Heart left ventricle (tissue), 16 donors: ENCODE measurements at regions of chr3 and their contacts with region 1.

Region 1: GRCh38 chr3:73143821-73144237 is 82.4 kb downstream of the EBLN2 start:
- DNase-seq: no peak
- ATAC-seq: peak; percentile 33 to 48 (median 44)
- H3K4me3 ChIP-seq: no peak overlapping the region
- H3K27ac ChIP-seq: peak overlapping the region in 5 of 12 donors; percentile 29 to 57 (median 36)
- H3K4me1 ChIP-seq: peaks cover 0 to 43% (median 18%) of the 10 kb centered on the region in 12 donors
- H3K27me3 ChIP-seq: no peaks in the 10 kb centered on the region
- CTCF ChIP-seq: no peak
- POLR2A ChIP-seq: no peak

Region 2: DNA sequence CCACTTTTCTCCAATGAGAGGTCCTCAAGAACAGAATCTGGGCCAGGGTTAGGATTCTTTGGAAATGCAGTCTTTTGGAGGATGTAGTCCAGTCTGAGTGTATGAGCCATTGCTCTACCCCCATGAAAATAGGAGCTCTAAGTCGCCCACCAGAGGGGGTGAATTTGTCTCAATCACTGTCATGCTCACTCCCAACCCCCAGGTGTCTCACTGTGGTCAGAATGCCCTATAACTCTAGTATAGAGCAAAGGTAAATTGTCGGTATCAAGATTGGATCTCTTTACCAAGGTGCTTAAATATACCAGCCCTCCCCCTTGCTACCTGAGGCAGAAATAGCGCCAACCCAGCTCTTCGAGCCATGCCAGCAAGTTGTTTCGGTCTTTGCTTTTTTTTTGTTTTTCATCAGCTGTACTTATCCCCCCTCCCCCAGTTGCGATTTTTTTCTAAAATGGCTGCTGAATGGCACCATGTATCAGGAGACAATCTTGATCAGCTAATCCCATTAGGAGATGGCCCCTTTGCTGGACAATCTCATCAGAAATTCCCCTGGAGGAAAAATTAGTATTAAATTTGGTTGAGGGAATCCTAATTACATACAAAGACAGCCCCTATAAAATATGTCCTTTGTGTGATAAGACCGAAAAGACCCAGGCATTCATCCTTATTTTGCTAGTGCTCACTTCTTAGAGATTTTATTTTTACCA is 48.4 kb after region 1 on chr3:
- intact Hi-C with region 1: no loop called
- DNase-seq: no peak
- ATAC-seq: no peak
- H3K4me3 ChIP-seq: no peak overlapping the region
- H3K27ac ChIP-seq: no peak overlapping the region
- H3K4me1 ChIP-seq: no peaks in the 10 kb centered on the region
- H3K27me3 ChIP-seq: no peaks in the 10 kb centered on the region
- CTCF ChIP-seq: peak in 3 of 12 donors; percentile 5 to 8 (median 6)
- POLR2A ChIP-seq: no peak

Region 3: DNA sequence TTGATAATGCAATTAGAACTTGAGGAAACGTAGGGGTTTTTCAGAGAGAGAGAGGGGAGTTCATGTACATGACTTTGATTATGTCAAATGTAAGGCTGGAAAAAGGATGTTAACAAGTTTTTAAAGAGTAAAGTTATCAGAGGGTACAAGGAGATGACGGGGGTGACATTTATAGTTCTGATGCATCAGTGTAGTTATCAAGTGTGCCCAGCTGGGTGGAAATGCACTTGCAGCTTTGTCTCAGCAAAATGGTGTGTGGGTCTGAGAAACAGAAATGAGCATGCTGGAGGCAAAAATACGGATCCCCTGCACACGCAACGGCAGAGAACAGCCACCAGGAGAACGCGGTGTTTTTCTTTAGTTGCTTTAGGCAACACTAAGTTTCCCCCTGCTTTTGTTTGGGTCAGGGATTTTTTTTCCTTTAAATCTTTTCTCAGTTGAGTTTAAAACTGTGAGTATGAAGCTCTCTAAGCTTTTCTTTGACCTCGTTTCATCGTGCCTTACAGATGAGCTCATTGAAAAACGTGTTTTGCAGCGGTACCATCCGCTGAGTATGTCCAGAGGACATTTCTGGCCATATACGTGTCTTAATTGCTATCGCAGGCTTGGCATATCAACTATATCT is 275.5 kb after region 1 on chr3:
- intact Hi-C with region 1: loop called in 1 of 10 experiments (anchors 10 kb)
- DNase-seq: no peak
- ATAC-seq: peak in 3 of 4 donors; percentile 52 to 67 (median 53)
- H3K4me3 ChIP-seq: peak overlapping the region in 1 of 12 donors; percentile 13
- H3K27ac ChIP-seq: peak overlapping the region in 6 of 12 donors; percentile 13 to 72 (median 23)
- H3K4me1 ChIP-seq: peaks cover 0 to 44% (median 24%) of the 10 kb centered on the region in 12 donors
- H3K27me3 ChIP-seq: no peaks in the 10 kb centered on the region
- CTCF ChIP-seq: peak in 1 of 12 donors; percentile 11
- POLR2A ChIP-seq: no peak